ENCODE measurements at regions of chr16 and their contacts with region 1.

Region 1: GRCh38 chr16:85491058-85491771 is 121.9 kb upstream of the GSE1 start:
- DNase-seq: peak; percentile 53
- ATAC-seq: peak; percentile 62
- H3K4me3 ChIP-seq: peak overlapping the region in 2 of 3 experiments; percentile 20 to 61; a peak in 2 of 6 replicates
- H3K27ac ChIP-seq: no peak overlapping the region
- H3K4me1 ChIP-seq: peaks cover 32% of the 10 kb centered on the region
- H3K27me3 ChIP-seq: peaks cover 0 to 2% of the 10 kb centered on the region in 2 experiments; a peak in 1 of 5 replicates
- CTCF ChIP-seq: peak; percentile 95
- EP300 ChIP-seq: no peak
- POLR2A ChIP-seq: no peak
- RAD21 ChIP-seq: peak; percentile 90

Region 2: GRCh38 chr16:85253084-85253941 is 237.9 kb before region 1 on chr16:
- CTCF ChIA-PET with region 1: no interaction called
- POLR2A ChIA-PET with region 1: no interaction called
- in situ Hi-C with region 1: no loop called
- intact Hi-C with region 1: no loop called
- DNase-seq: peak; percentile 31
- ATAC-seq: peak; percentile 93
- H3K4me3 ChIP-seq: no peak overlapping the region
- H3K27ac ChIP-seq: no peak overlapping the region
- H3K4me1 ChIP-seq: peaks cover 6% of the 10 kb centered on the region
- H3K27me3 ChIP-seq: no peaks in the 10 kb centered on the region
- CTCF ChIP-seq: peak; percentile 98
- EP300 ChIP-seq: no peak
- POLR2A ChIP-seq: no peak
- RAD21 ChIP-seq: peak; percentile 73

Region 3: GRCh38 chr16:85448557-85449197 is 42.5 kb before region 1 on chr16:
- CTCF ChIA-PET with region 1: no interaction called
- POLR2A ChIA-PET with region 1: no interaction called
- in situ Hi-C with region 1: no loop called
- intact Hi-C with region 1: loop called (anchors 5 kb)
- DNase-seq: peak; percentile 79
- ATAC-seq: peak; percentile 91
- H3K4me3 ChIP-seq: peak overlapping the region in 2 of 3 experiments; percentile 21 to 59; a peak in 3 of 6 replicates
- H3K27ac ChIP-seq: peak overlapping the region; percentile 68
- H3K4me1 ChIP-seq: peaks cover 59% of the 10 kb centered on the region
- H3K27me3 ChIP-seq: peaks cover 5 to 59% of the 10 kb centered on the region in 2 experiments
- CTCF ChIP-seq: peak; percentile 44; the same call in 1 of the 2 replicates
- EP300 ChIP-seq: peak in 1 of 2 experiments; percentile 85; a peak in 2 of 4 replicates
- POLR2A ChIP-seq: no peak
- RAD21 ChIP-seq: peak; percentile 20; the same call in 1 of the 2 replicates

Region 4: GRCh38 chr16:85564277-85565051 is 73.2 kb after region 1 on chr16:
- CTCF ChIA-PET with region 1: interaction called, 10 read pairs
- POLR2A ChIA-PET with region 1: interaction called, 3 read pairs
- in situ Hi-C with region 1: no loop called
- intact Hi-C with region 1: loop called (anchors 2 kb)
- DNase-seq: no peak
- ATAC-seq: no peak
- H3K4me3 ChIP-seq: no peak overlapping the region
- H3K27ac ChIP-seq: no peak overlapping the region
- H3K4me1 ChIP-seq: peaks cover 56% of the 10 kb centered on the region
- H3K27me3 ChIP-seq: no peaks in the 10 kb centered on the region
- CTCF ChIP-seq: peak; percentile 72
- EP300 ChIP-seq: no peak
- POLR2A ChIP-seq: no peak
- RAD21 ChIP-seq: no peak

Measured in HepG2 (cell line).